ENCODE measurements at regions of chr15 and their contacts with region 1.

Region 1: DNA sequence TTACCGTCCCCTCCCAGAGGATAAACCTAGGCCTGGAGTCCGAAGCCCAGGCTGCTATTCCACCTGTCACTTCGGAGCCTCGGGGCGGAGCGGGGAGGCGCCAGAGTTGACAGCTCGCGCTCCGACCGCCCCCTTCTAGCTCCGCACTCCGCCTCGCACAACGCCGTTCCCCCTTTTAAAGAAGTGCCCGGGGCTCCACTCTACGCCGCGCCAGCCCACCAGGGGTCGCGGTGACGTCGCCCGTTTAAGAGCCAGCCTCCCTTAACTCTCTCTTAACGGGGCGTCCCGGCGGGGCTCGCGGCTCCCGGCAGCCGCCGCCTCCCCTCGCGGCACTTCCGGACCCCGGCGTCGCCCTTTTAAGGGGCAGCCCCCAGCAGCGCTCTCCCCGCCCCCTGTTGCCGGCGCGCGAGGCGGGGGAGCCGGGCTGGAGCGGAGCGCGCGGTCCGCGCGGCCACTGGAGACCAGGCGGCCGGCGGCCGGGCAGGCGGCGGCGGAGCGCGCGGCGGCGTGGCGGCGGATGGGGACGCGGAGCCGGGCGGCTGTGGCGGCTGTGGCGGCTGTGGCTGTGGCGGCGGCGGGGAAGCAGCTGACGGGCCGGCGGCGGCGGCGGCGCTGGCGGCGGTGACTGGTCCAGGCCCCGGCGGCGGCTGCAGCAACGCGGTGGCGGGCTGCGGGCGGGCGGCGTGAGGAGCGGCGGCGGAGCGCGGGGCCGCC is at the start of gene INAFM2:
- DNase-seq: peak; percentile 59 to 81
- H3K4me3 ChIP-seq: peak within 1 kb of the TSS; percentile 59
- H3K27ac ChIP-seq: no peak within 1 kb of the TSS
- H3K4me1 ChIP-seq: peaks cover 10% of the 10 kb centered on the region; the same call in 1 of the 2 replicates
- H3K27me3 ChIP-seq: no peaks in the 10 kb centered on the region
- CTCF ChIP-seq: peak; percentile 50
- total RNA-seq, gene INAFM2: 2.4 and 3.1 TPM in 2 replicates

Region 2: DNA sequence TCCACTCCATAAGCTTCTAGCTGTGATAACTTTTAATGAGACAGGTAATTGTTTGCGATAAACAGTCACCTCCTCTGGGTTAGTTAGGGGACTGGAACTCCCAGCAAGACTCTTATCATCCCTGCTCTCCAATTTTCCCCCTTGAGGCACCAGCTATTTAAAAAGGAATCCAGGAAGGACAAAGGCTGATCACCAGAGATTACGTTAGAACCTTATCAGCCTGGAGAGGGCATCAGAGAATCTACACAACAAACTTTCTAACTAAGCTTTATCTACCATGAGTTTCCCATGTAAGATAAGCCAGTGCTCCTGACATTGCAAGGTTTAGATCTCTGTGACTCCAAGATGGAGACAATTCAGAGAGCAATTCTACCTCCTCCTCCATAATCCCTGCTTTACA is 434.6 kb before region 1 on chr15:
- CTCF ChIA-PET with region 1: interaction called, 12 read pairs
- POLR2A ChIA-PET with region 1: no interaction called
- intact Hi-C with region 1: no loop called
- DNase-seq: no peak
- H3K4me3 ChIP-seq: no peak overlapping the region
- H3K27ac ChIP-seq: no peak overlapping the region
- H3K4me1 ChIP-seq: peaks cover 4% of the 10 kb centered on the region; the same call in 1 of the 2 replicates
- H3K27me3 ChIP-seq: no peaks in the 10 kb centered on the region
- CTCF ChIP-seq: no peak